A549 (cell line): ENCODE measurements at regions of chr1 and their contacts with region 1.

Region 1: GRCh38 chr1:160830321-160831153 is 32.1 kb downstream of the CD244 start:
- DNase-seq: peak; percentile 47 to 73
- ATAC-seq: peak; percentile 86 to 89
- H3K4me3 ChIP-seq: no peak overlapping the region
- H3K27ac ChIP-seq: peak overlapping the region in 1 of 2 experiments; percentile 47; a peak in 2 of 6 replicates
- H3K4me1 ChIP-seq: peaks cover 25% of the 10 kb centered on the region
- CTCF ChIP-seq: peak; percentile 82
- EP300 ChIP-seq: no peak
- POLR2A ChIP-seq: no peak
- RAD21 ChIP-seq: peak; percentile 73 to 77

Region 2: DNA sequence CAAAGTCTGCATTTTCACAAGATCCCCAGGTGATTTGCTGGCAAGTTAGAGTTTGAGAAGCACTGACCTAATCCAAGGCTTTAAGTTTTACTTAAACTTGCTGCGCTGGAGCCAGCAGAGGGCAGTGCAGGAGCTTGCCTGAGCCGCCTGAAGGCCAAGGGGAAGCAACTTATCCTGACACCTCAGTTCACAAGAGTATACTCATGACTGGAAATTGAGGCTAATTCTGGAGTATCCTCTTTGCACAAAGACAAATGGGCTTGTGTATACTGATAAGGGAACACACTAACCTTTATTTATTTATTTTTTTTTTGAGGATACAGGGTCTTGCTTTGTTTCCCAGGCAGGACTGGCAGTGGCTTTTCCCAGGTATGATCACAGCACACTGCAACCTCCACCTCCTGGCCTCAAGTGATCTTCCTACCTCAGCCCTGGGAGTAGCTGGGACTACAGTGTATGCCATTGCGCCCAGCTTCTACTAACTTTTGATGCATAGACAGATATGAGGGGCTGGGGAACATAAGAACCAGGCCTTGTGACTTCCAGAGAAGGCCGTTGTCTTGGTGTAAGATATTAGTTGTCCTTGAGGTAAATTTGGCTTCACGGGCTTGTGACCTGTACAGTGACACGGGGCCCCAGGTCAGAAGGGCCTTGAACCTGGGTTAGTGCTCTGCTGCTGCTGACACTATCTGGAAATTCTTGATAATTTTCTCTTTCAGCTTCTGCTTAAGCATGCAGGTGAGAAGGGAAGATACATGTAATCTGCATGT is 154.7 kb before region 1 on chr1:
- CTCF ChIA-PET with region 1: interaction called, 21 read pairs
- POLR2A ChIA-PET with region 1: no interaction called
- DNase-seq: peak; percentile 45 to 77
- ATAC-seq: peak; percentile 92 to 97
- H3K4me3 ChIP-seq: no peak overlapping the region
- H3K27ac ChIP-seq: no peak overlapping the region
- H3K4me1 ChIP-seq: no peaks in the 10 kb centered on the region
- CTCF ChIP-seq: peak; percentile 80
- EP300 ChIP-seq: no peak
- POLR2A ChIP-seq: no peak
- RAD21 ChIP-seq: peak; percentile 73 to 78

Region 3: DNA sequence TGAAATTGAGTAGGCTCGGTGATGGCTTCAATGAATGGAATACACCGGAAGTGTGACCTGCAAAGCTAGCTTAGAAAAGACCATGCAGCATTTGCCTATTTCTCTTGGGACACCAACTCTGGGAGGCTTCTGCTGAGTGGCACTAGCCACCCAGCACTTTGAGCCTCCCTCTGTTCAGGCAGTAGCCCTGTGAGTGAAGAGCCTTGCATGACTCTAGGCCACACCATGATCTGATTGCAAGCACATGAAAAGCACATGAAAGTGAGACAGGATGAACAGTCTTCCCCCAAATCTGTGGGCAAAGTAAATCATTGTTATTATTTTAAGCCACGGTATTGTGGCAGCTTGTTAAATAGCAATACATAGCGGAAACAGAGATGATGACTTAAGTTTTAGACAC is 121.7 kb before region 1 on chr1:
- CTCF ChIA-PET with region 1: interaction called, 10 read pairs
- POLR2A ChIA-PET with region 1: no interaction called
- DNase-seq: no peak
- ATAC-seq: no peak
- H3K4me3 ChIP-seq: no peak overlapping the region
- H3K27ac ChIP-seq: no peak overlapping the region
- H3K4me1 ChIP-seq: no peaks in the 10 kb centered on the region
- CTCF ChIP-seq: no peak
- EP300 ChIP-seq: no peak
- POLR2A ChIP-seq: no peak
- RAD21 ChIP-seq: no peak

Region 4: GRCh38 chr1:160748181-160748877 is 82.2 kb before region 1 on chr1:
- CTCF ChIA-PET with region 1: interaction called, 17 read pairs
- POLR2A ChIA-PET with region 1: no interaction called
- DNase-seq: peak; percentile 73 to 74
- ATAC-seq: peak; percentile 92 to 98
- H3K4me3 ChIP-seq: 0 out of 3 replicates have a peak overlapping the region, but pooled peaks have one; percentile 2
- H3K27ac ChIP-seq: peak overlapping the region in 1 of 2 experiments; percentile 60; a peak in 2 of 6 replicates
- H3K4me1 ChIP-seq: peaks cover 15% of the 10 kb centered on the region
- CTCF ChIP-seq: peak; percentile 42
- EP300 ChIP-seq: no peak
- POLR2A ChIP-seq: no peak
- RAD21 ChIP-seq: peak in 1 of 2 experiments; percentile 43; a peak in 3 of 5 replicates

Region 5: DNA sequence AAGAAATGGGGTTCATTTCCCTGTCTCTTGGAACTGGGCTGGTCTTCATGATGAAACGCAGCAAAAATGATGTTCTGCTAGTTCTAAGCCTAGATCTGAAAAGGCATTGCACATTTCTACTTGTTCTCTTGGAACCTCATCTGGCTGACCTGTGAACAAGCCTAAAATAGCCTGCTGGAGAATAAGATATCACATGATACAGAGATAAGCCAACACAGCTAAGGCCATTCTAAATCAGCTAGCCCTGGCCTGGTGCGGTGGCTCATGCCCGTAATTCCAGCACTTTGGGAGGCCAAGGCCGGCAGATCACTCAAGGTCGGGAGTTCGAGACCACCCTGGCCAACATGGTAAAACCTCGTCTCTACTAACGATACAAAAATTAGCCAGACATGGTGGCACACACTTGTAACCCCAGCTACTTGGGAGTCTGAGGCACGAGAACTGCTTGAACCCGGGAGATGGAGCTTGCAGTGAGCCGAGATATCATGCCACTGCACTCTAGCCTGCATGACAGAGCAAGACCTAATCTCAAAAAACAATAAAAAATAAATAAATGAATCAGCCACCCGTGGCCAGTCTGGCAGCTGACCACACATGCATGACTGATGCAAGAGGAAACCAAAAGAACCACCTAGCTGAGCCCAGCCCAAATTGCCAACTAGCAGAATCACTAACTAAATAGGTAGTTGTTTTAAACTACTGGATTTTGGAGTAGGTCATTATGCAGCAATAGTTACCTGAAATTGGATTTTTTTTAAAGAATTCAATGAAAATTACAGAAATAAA is 14.1 kb after region 1 on chr1:
- CTCF ChIA-PET with region 1: interaction called, 20 read pairs
- POLR2A ChIA-PET with region 1: no interaction called
- DNase-seq: no peak
- ATAC-seq: no peak
- H3K4me3 ChIP-seq: no peak overlapping the region
- H3K27ac ChIP-seq: no peak overlapping the region
- H3K4me1 ChIP-seq: no peaks in the 10 kb centered on the region
- CTCF ChIP-seq: no peak
- EP300 ChIP-seq: no peak
- POLR2A ChIP-seq: no peak
- RAD21 ChIP-seq: no peak